Left cardiac atrium (tissue), 4 donors: ENCODE measurements at regions of chr2 and their contacts with region 1.

Region 1: GRCh38 chr2:28751252-28751955 is at the start of gene PPP1CB:
- DNase-seq: peak; percentile 97
- ATAC-seq: peak; percentile 95 to 96
- total RNA-seq, gene PPP1CB: 260 to 326 TPM

Region 2: GRCh38 chr2:28594289-28595108 is 156.9 kb before region 1 on chr2:
- intact Hi-C with region 1: loop called (anchors 2 to 10 kb)
- DNase-seq: peak; percentile 91
- ATAC-seq: peak; percentile 76 to 86

Region 3: GRCh38 chr2:28678944-28679343 is 72.5 kb before region 1 on chr2:
- intact Hi-C with region 1: loop called in 1 of 2 experiments (anchors 5 kb)
- DNase-seq: no peak
- ATAC-seq: no peak